Right ventricle myocardium inferior (tissue), 1 donor: ENCODE measurements at regions of chr6 and their contacts with region 1.

Region 1: DNA sequence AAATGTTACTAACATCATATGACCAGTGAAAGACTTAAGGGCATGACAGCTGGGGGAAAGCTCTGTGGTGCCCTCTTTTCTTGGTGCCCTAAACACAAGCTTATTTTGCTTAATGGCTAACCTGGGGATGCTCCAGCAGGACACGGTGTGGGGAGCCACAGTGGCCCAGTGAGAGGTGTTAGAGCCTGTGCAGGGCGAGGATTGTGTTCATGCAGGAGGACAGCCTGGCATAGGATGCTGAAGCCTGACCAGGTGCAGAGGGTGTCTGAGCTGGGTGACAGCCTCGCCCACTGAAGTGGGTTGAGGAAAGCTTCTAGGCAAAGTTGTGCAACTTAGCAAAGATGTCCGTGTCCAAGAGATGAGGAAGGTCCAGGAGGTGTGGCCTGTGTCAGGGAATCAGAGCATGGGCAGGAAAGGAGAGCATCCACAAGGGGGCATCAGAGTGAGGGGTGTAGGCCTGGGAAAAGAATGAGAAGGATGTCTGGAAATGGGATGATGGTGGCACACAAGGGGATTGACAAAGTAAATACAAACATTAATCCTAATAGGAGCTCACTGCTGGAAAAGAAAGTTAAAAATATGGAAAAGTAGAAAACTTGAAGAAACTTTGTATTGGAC is 33.9 kb downstream of the SLC17A4 start:
- DNase-seq: no peak
- ATAC-seq: no peak

Region 2: GRCh38 chr6:26003102-26003694 is 214.8 kb after region 1 on chr6:
- intact Hi-C with region 1: loop called (anchors 5 kb)
- DNase-seq: no peak
- ATAC-seq: peak; percentile 59